ENCODE measurements at regions of chr15 and their contacts with region 1.

Region 1: DNA sequence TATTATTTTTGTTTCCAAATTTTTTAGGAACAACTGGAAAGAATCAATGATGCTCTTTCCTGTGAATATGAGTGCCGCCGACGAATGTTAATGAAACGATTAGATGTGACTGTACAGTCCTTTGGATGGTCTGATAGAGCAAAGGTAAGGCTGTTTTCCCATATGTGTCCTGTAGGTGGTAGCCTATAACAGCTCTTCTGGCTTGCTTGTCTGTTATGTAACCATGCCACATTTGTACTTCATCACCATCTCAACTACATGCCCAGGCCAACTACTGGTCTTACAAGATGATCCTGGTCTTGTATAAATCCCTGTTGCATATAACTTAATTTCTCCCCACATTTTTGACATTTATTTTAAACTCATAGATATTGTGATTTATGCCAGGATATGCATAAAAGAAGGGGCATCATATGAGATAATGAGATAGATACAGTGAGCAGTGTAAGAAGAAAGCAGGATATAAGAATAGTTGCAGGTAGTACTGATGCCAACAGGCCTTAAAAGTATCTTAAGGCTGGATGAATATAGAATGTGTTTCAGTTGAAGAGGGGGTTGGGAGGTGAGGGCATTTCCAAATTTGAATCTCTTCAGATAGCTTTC is 20.3 kb downstream of the FAM98B start:
- DNase-seq: peak; percentile 40
- H3K4me3 Mint-ChIP-seq: no peak overlapping the region
- H3K27ac Mint-ChIP-seq: peak overlapping the region; percentile 32
- H3K4me1 Mint-ChIP-seq: peaks cover 4% of the 10 kb centered on the region
- H3K27me3 Mint-ChIP-seq: no peaks in the 10 kb centered on the region

Region 2: DNA sequence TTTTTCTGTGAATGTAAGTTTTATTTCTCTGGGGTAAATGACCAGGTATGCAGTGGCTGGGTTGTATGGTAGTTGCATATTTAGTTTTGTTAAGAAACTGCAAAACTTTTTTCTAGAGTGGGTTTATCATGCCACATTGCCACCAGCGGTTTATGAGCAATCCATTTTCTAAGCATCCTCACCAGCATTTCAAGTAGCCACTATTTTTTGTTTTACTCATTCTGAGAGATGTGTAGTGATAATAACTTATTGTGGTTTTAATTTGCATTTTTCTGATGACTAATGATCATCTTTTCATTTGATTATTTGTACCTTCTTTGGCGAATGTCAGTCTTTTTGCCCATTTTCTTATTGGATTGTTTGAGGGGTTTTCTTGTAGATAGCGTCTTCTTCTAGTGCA is 165.5 kb before region 1 on chr15:
- CTCF ChIA-PET with region 1: no interaction called
- POLR2A ChIA-PET with region 1: no interaction called
- DNase-seq: peak; percentile 17
- H3K4me3 Mint-ChIP-seq: no peak overlapping the region
- H3K27ac Mint-ChIP-seq: no peak overlapping the region
- H3K4me1 Mint-ChIP-seq: peaks cover 16% of the 10 kb centered on the region
- H3K27me3 Mint-ChIP-seq: peaks cover 69% of the 10 kb centered on the region

Region 3: DNA sequence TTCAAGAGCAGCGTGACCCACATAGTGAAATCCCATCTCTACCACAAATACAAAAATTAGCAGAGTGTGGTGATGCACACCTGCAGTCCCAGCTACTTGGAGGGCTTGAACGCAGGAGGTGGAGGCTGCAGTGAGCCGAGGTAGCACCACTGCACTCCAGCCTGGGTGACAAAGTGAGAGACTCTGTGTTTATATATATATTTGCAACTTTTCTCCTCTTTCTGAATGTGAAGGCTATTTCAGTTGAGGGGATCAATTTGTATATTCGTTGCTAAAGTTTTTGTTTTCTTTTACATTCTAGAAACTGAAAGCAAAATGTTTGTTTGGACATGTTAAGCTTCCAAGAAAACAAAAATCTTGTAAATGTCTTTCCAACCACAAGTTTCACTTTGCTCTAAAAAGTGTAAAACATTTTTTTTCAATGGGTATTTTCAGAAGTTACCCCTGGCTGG is 50.1 kb before region 1 on chr15:
- CTCF ChIA-PET with region 1: no interaction called
- POLR2A ChIA-PET with region 1: no interaction called
- DNase-seq: no peak
- H3K4me3 Mint-ChIP-seq: no peak overlapping the region
- H3K27ac Mint-ChIP-seq: no peak overlapping the region
- H3K4me1 Mint-ChIP-seq: peaks cover 12% of the 10 kb centered on the region
- H3K27me3 Mint-ChIP-seq: peaks cover 38% of the 10 kb centered on the region

Region 4: GRCh38 chr15:38453971-38454695 is 20.1 kb before region 1 on chr15 and contains the start of gene FAM98B:
- CTCF ChIA-PET with region 1: interaction called, 11 read pairs
- POLR2A ChIA-PET with region 1: interaction called, 21 read pairs
- DNase-seq: peak; percentile 89
- H3K4me3 Mint-ChIP-seq: peak within 1 kb of the TSS; percentile 93
- H3K27ac Mint-ChIP-seq: peak within 1 kb of the TSS; percentile 84
- H3K4me1 Mint-ChIP-seq: peaks cover 35% of the 10 kb centered on the region
- H3K27me3 Mint-ChIP-seq: peaks cover 14% of the 10 kb centered on the region
- total RNA-seq, gene FAM98B: 33.2 to 35.3 TPM

Measured in activated CD4-positive, alpha-beta memory T cell treated with anti-CD3 and anti-CD28 coated beads, Interleukin-2, amount 10 ng/mL, durations not matched to agents 7 days and 5 days (primary cell).